ENCODE measurements at regions of chr6 and their contacts with region 1.

Region 1: GRCh38 chr6:125956506-125957390 is at the start of gene HINT3:
- DNase-seq: peak; percentile 97
- H3K4me3 Mint-ChIP-seq: no peak within 1 kb of the TSS
- H3K27ac Mint-ChIP-seq: peak within 1 kb of the TSS; percentile 44
- H3K4me1 Mint-ChIP-seq: peaks cover 8% of the 10 kb centered on the region
- H3K27me3 Mint-ChIP-seq: no peaks in the 10 kb centered on the region
- total RNA-seq, gene HINT3: 11.0 to 11.7 TPM

Region 2: DNA sequence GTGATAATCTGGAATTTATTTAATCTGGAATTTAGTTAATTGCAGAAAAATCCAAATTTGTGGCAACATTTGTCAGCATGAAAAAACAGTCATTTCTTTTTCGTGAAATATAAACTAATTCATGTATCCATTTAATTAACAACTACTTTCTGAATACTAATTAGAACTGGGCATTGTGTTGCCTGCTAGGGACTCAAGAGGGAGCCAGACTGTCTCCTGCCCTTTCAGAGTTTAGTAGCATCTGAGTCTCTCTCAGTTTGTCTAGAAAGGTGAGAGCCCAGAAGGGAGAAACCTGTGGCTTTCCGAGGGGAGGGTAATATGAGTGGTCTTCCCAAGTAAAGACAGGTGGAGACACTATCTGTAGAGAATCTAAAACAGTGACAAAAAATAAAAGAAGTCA is 444.1 kb before region 1 on chr6:
- CTCF ChIA-PET with region 1: no interaction called
- POLR2A ChIA-PET with region 1: no interaction called
- DNase-seq: no peak
- H3K4me3 Mint-ChIP-seq: no peak overlapping the region
- H3K27ac Mint-ChIP-seq: no peak overlapping the region
- H3K4me1 Mint-ChIP-seq: no peaks in the 10 kb centered on the region
- H3K27me3 Mint-ChIP-seq: no peaks in the 10 kb centered on the region

Region 3: DNA sequence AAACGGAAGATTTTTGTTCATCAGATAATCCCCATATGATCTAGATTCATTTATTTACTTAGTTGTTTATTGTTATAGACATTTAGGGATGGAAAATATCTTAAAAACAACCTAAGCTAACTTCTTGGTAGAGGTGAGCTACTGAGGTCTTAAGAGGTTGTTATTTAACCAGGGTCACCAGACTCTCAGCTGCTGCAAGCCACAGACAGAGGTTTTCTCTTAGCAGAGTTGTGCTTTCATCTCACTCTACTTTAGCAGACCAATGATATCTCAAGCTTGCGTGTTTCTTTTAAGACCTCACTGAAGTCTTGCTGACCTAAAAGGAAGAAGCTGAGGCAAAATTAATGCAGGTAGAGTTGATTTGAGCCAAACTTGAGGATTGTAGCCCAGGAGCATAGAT is 122.4 kb before region 1 on chr6:
- CTCF ChIA-PET with region 1: interaction called, 14 read pairs
- POLR2A ChIA-PET with region 1: no interaction called
- DNase-seq: no peak
- H3K4me3 Mint-ChIP-seq: no peak overlapping the region
- H3K27ac Mint-ChIP-seq: peak overlapping the region; percentile 11
- H3K4me1 Mint-ChIP-seq: peaks cover 53% of the 10 kb centered on the region
- H3K27me3 Mint-ChIP-seq: no peaks in the 10 kb centered on the region

Region 4: GRCh38 chr6:125899726-125900182 is 57.0 kb before region 1 on chr6:
- CTCF ChIA-PET with region 1: interaction called, 52 read pairs
- POLR2A ChIA-PET with region 1: interaction called, 3 read pairs
- DNase-seq: no peak
- H3K4me3 Mint-ChIP-seq: no peak overlapping the region
- H3K27ac Mint-ChIP-seq: no peak overlapping the region
- H3K4me1 Mint-ChIP-seq: peaks cover 18% of the 10 kb centered on the region
- H3K27me3 Mint-ChIP-seq: no peaks in the 10 kb centered on the region

Region 5: DNA sequence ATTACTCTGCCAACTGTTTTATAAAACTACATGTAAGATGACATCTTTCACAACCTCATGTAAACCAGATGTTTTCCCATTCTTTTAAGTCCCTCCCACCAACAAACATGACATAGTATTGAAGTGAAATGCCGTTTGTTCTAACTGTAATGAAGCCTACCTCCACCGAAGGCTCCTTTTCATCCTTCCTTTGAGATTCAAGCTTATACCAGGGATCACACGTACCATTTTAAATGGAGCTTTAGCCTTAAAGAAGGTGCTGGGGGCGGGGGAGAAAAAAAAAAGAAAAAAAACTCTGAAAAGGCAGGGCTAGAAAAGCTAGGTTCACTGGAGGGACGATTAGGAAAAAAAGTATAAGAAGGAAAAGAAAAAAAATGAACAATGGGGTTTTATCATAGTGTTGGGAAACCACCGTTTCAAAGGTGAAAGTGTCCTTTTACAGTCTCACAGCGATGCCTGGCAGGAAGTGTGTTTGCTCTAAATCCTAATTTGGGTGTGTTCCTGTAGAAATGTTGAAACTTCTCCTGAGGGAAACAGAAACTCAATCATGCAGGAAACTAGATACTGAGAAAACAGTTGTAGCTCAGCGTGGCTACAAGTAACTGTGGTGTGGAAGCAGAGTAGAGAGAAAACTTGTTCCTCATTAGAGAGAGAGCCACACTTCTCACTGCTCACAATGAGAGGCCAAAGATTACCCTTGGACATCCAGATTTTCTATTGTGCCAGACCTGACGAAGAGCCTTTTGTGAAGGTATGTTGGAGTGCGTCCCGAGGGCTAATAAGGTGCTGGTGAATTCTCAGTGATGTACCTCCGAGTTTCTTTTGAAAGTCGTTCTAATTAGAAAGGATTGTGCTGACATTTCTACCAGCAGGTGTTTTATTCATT is 37.8 kb before region 1 on chr6:
- CTCF ChIA-PET with region 1: interaction called, 36 read pairs
- POLR2A ChIA-PET with region 1: interaction called, 26 read pairs
- DNase-seq: peak; percentile 58
- H3K4me3 Mint-ChIP-seq: peak overlapping the region; percentile 74
- H3K27ac Mint-ChIP-seq: peak overlapping the region; percentile 82
- H3K4me1 Mint-ChIP-seq: peaks cover 46% of the 10 kb centered on the region
- H3K27me3 Mint-ChIP-seq: no peaks in the 10 kb centered on the region

Region 6: GRCh38 chr6:125944434-125944816 is 12.3 kb before region 1 on chr6:
- CTCF ChIA-PET with region 1: interaction called, 14 read pairs
- POLR2A ChIA-PET with region 1: interaction called, 4 read pairs
- DNase-seq: no peak
- H3K4me3 Mint-ChIP-seq: no peak overlapping the region
- H3K27ac Mint-ChIP-seq: no peak overlapping the region
- H3K4me1 Mint-ChIP-seq: peaks cover 35% of the 10 kb centered on the region
- H3K27me3 Mint-ChIP-seq: no peaks in the 10 kb centered on the region

Region 7: GRCh38 chr6:125986300-125987025 is 29.7 kb after region 1 on chr6 and contains the start of gene TRMT11:
- CTCF ChIA-PET with region 1: interaction called, 22 read pairs
- POLR2A ChIA-PET with region 1: interaction called, 22 read pairs
- DNase-seq: peak; percentile 79
- H3K4me3 Mint-ChIP-seq: peak within 1 kb of the TSS; percentile 3
- H3K27ac Mint-ChIP-seq: no peak within 1 kb of the TSS
- H3K4me1 Mint-ChIP-seq: peaks cover 14% of the 10 kb centered on the region
- H3K27me3 Mint-ChIP-seq: no peaks in the 10 kb centered on the region
- total RNA-seq, gene TRMT11: 17.6 to 19.2 TPM

Region 8: GRCh38 chr6:126131246-126131645 is 174.5 kb after region 1 on chr6:
- CTCF ChIA-PET with region 1: no interaction called
- POLR2A ChIA-PET with region 1: no interaction called
- DNase-seq: no peak
- H3K4me3 Mint-ChIP-seq: no peak overlapping the region
- H3K27ac Mint-ChIP-seq: no peak overlapping the region
- H3K4me1 Mint-ChIP-seq: no peaks in the 10 kb centered on the region
- H3K27me3 Mint-ChIP-seq: no peaks in the 10 kb centered on the region

Measured in activated CD4-positive, alpha-beta memory T cell treated with anti-CD3 and anti-CD28 coated beads, Interleukin-2, amount 10 ng/mL, durations not matched to agents 7 days and 5 days (primary cell).